OCI-LY7 (cell line): ENCODE measurements at regions of chr6 and their contacts with region 1.

Region 1: DNA sequence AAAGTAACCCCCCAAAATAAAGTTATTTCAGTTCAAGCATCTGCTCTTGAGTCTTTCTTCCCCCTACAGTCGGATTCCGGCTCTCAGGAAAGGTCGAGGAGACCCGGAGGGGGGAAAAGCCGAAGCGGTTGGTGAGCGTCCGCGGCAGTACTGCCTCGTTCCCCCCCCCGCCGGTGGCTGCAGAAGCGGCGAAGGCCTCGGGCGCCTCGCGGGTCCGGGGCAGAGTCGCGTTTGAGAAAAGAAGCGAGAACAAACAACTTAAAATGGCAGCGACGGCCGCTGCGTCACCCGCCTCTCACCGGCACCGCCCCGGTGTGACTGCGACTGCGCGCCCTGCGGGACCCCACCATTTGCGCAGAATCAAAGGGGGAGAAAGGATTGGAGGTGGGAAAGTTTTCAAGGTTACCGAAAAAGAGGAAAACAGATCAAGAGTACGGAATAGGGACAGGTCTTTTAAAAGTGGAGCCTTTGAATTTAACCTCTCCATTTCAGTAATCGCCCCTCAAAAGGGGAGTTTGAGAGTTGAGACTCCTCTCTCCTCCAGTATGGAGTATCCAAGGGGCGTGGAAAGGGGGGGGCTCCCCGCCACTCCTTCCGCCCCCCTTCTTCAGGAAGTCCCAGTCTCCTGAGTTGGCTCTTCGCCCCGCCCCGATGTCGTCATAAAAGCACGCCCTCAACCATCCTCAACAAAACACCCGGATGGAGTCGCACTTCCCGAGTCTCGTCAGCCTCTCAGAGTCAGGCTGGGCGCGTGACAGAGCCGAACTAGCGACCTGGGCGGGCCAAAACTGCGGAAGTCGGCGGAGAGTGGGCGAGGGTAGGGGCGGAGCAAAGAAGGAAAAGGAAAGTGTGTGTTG is 1.9 kb upstream of the C6orf62 start:
- DNase-seq: peak; percentile 100
- H3K4me3 ChIP-seq: peak overlapping the region; percentile 86
- H3K27ac ChIP-seq: peak overlapping the region; percentile 84
- H3K4me1 ChIP-seq: peaks cover 31% of the 10 kb centered on the region
- CTCF ChIP-seq: no peak

Region 2: DNA sequence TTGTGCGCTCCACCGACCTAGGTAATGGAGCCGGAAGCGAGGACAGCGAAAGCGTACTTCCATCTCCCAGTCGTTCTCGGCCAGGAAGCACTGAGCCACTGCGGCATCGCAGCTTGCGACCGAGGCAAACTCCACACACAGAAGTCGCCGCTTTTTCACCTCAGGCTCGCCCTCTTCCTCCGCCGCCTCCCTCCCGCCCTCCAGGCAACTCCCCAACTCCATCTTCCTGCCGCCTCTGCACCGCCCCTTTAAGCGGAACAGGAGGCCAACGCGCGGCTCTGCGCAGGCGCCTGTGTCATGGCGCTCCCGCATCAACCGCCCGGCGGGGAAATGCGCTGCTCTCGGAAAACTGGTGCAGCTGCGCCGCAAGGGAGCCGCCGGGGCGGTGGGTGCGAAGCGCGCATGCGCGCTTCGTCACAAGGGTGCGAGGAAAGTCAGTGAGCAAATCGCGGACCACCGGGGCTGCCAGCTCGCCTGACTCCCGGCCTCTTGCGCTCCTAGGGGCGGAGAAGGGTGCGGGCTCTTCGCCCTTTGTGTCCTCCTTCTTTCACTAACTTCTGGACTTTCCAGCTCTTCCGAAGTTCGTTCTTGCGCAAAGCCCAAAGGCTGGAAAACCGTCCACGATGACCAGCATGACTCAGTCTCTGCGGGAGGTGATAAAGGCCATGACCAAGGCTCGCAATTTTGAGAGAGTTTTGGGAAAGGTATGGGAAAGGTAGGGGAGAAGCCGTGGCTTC is 54.0 kb before region 1 on chr6 and contains the starts of genes ACOT13 and TDP2:
- CTCF ChIA-PET with region 1: no interaction called
- POLR2A ChIA-PET with region 1: no interaction called
- intact Hi-C with region 1: loop called (anchors 2 kb)
- DNase-seq: peak; percentile 98
- H3K4me3 ChIP-seq: peak within 1 kb of the TSS; percentile 98
- H3K27ac ChIP-seq: peak within 1 kb of the TSS; percentile 82
- H3K4me1 ChIP-seq: peaks cover 25% of the 10 kb centered on the region
- CTCF ChIP-seq: peak; percentile 70
- total RNA-seq, gene ACOT13: 4.1 and 6.7 TPM in 2 replicates
- total RNA-seq, gene TDP2: 22.5 and 27.2 TPM in 2 replicates

Region 3: GRCh38 chr6:24689964-24690363 is 30.9 kb before region 1 on chr6:
- CTCF ChIA-PET with region 1: no interaction called
- POLR2A ChIA-PET with region 1: no interaction called
- intact Hi-C with region 1: no loop called
- DNase-seq: no peak
- H3K4me3 ChIP-seq: no peak overlapping the region
- H3K27ac ChIP-seq: no peak overlapping the region
- H3K4me1 ChIP-seq: peaks cover 7% of the 10 kb centered on the region
- CTCF ChIP-seq: no peak

Region 4: DNA sequence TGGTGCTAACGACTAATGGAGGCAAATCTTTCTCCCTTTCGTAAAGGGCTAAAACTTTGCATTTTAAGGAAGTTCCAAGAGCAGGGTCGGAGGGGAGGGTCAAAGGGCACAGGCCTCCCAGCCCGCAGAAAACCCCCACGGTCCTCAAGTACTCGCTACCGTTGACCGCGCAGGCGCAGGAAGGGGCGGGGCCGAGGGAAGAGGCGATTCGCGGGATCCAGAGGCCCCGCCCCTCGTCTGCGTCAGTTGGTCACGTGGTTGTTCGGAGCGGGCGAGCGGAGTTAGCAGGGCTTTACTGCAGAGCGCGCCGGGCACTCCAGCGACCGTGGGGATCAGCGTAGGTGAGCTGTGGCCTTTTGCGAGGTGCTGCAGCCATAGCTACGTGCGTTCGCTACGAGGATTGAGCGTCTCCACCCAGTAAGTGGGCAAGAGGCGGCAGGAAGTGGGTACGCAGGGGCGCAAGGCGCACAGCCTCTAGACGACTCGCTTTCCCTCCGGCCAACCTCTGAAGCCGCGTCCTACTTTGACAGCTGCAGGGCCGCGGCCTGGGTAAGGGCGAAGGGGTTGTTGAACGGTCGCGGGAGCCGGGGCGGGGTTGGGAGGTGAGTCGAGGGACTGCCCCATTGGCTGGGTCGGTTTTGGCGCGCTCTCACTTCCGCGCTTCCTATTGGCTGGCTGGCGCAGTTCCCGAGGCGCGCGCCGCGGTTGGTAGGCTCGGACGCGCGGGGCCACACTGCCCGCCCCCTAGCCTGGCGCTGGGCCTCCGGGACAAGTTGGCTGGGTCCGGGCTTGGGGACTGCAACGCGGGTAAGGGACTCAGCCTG is 54.1 kb after region 1 on chr6 and contains the start of gene GMNN:
- CTCF ChIA-PET with region 1: no interaction called
- POLR2A ChIA-PET with region 1: interaction called, 5 read pairs
- intact Hi-C with region 1: loop called (anchors 2 kb)
- DNase-seq: peak; percentile 98
- H3K4me3 ChIP-seq: peak within 1 kb of the TSS; percentile 95
- H3K27ac ChIP-seq: peak within 1 kb of the TSS; percentile 94
- H3K4me1 ChIP-seq: peaks cover 36% of the 10 kb centered on the region
- CTCF ChIP-seq: no peak
- total RNA-seq, gene GMNN: 101 and 130 TPM in 2 replicates